Right ventricle myocardium superior (tissue), 1 donor: ENCODE measurements at regions of chr1 and their contacts with region 1.

Region 1: GRCh38 chr1:150149271-150150132 is at the start of gene PLEKHO1:
- DNase-seq: peak; percentile 91
- ATAC-seq: peak; percentile 82
- total RNA-seq, gene PLEKHO1: 45.9 TPM

Region 2: GRCh38 chr1:150106341-150106740 is 43.2 kb before region 1 on chr1:
- intact Hi-C with region 1: loop called (anchors 10 kb)
- DNase-seq: no peak
- ATAC-seq: no peak

Region 3: GRCh38 chr1:150196417-150196816 is 46.9 kb after region 1 on chr1:
- intact Hi-C with region 1: no loop called
- DNase-seq: no peak
- ATAC-seq: no peak

Region 4: DNA sequence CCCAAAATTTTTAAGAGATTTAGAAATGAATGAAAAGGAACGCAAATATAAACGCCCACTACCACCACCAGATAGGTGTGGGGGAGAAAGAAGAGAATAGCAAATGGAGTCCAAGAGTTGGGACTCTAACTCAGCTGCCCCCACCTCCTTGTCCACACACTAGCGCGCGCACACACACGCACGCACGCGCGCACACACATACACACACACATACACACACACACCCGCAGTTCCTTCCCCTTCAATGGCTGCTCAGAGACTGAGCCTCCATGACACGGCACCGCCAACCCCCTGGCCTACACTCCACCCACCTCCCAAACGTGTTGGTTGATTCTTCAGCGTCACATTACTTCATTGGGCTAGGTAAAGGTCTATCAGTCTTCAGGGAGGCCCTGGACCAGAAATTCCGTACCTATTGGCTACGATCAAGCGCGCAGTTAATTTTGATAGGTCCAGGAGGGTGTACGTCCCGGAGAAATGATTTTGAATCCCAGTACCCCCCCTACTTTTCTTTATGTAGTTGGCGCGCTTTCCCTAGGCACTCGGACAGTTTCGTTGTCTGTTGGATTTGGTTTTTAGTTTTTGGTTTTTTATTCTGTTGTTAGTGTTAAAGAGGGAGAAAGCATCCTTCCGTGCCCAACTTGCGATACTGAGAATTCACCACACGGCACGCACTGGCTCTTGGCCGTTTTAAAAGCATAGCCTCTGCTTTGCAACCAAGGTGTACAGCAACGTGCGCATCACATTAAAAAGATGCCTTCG is 86.5 kb after region 1 on chr1 and contains the start of gene ANP32E:
- intact Hi-C with region 1: loop called (anchors 10 kb)
- DNase-seq: peak; percentile 96
- ATAC-seq: peak; percentile 95
- total RNA-seq, gene ANP32E: 24.9 TPM